AG04450 (cell line): ENCODE measurements at regions of chr6 and their contacts with region 1.

Region 1: GRCh38 chr6:149431905-149432775 is 32.1 kb downstream of the SUMO4 start:
- DNase-seq: peak; percentile 53
- H3K4me3 ChIP-seq: peak overlapping the region; percentile 7; the same call in 1 of the 2 replicates
- H3K27ac ChIP-seq: no peak overlapping the region
- H3K27me3 ChIP-seq: no peaks in the 10 kb centered on the region
- CTCF ChIP-seq: peak; percentile 96

Region 2: DNA sequence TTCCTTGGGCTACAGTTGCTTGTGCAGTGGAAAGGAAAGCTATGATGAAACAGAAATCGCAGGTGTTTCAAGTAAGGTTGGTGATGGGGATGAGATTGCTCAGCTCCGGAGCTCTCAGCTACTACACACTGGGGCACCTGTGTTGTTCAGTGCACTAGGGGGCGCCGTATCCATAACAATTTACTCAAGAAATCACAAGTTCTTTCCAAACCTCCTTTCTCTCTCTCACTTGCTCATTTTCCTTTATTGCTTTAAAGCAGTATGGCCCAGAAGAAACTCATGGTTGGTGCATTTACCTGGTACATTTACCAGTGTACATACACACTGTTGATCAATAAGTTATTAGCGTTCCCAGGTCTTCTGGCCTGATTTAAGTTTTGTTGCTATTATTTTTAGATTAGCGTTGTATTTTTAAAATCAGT is 349.8 kb before region 1 on chr6:
- CTCF ChIA-PET with region 1: interaction called, 48 read pairs
- POLR2A ChIA-PET with region 1: no interaction called
- DNase-seq: no peak
- H3K4me3 ChIP-seq: no peak overlapping the region
- H3K27ac ChIP-seq: no peak overlapping the region
- H3K27me3 ChIP-seq: no peaks in the 10 kb centered on the region
- CTCF ChIP-seq: peak; percentile 73